Activated CD4-positive, alpha-beta memory T cell treated with anti-CD3 and anti-CD28 coated beads for 36 hours (primary cell): ENCODE measurements at regions of chr6 and their contacts with region 1.

Region 1: GRCh38 chr6:170554013-170554795 is at the start of gene TBP:
- DNase-seq: peak; percentile 99
- H3K4me3 Mint-ChIP-seq: no peak within 1 kb of the TSS
- H3K27ac Mint-ChIP-seq: no peak within 1 kb of the TSS
- H3K4me1 Mint-ChIP-seq: peaks cover 40% of the 10 kb centered on the region
- H3K27me3 Mint-ChIP-seq: no peaks in the 10 kb centered on the region
- total RNA-seq, gene TBP: 21.2 to 22.3 TPM

Region 2: GRCh38 chr6:168968228-168968627 is 1586.0 kb before region 1 on chr6:
- CTCF ChIA-PET with region 1: no interaction called
- POLR2A ChIA-PET with region 1: no interaction called
- intact Hi-C with region 1: no loop called
- DNase-seq: peak; percentile 16
- H3K4me3 Mint-ChIP-seq: no peak overlapping the region
- H3K27ac Mint-ChIP-seq: no peak overlapping the region
- H3K4me1 Mint-ChIP-seq: no peaks in the 10 kb centered on the region
- H3K27me3 Mint-ChIP-seq: peaks cover 15% of the 10 kb centered on the region

Region 3: DNA sequence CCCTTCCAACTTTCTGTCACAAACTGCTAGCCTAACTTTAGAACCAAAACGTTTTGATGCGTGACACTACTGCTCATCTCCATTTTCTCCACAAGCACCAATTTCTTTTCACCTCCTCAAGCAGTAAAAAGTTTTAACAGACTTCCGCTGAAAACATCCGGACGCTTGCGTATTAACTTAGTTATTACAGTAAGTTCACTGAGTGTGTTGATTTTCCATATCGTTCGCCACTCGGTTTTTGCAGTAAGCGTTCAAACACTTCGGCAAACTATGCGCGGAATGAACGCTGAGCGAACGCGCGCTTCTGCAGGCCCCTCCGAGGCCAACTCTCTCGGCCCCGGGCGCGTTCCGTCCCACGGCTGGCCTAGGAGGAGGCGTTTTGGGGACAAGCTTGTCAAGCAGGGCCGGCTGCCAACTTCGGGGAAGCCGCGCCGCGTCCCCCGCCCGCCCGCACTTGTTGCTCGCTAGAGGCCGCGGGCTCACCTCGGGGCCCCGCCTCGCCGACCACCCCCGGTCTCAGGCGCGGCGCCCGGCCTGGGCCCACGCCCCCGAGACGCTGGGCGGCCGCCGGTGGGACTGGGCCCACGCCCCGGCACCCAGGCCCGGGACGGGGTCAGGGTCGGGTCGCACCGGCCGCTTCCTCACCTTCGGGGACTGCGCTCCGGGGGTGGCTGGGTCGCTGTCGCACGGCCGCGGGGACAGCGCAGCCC is 830.8 kb before region 1 on chr6:
- CTCF ChIA-PET with region 1: no interaction called
- POLR2A ChIA-PET with region 1: no interaction called
- intact Hi-C with region 1: loop called (anchors 1 kb)
- DNase-seq: peak; percentile 76
- H3K4me3 Mint-ChIP-seq: peak overlapping the region; percentile 98
- H3K27ac Mint-ChIP-seq: peak overlapping the region; percentile 100
- H3K4me1 Mint-ChIP-seq: peaks cover 42% of the 10 kb centered on the region
- H3K27me3 Mint-ChIP-seq: no peaks in the 10 kb centered on the region

Region 4: GRCh38 chr6:169751242-169752073 is 802.7 kb before region 1 on chr6 and contains the starts of genes DYNLT2 and ERMARD:
- CTCF ChIA-PET with region 1: interaction called, 4 read pairs
- POLR2A ChIA-PET with region 1: interaction called, 5 read pairs
- intact Hi-C with region 1: loop called (anchors 1 kb)
- DNase-seq: peak; percentile 96
- H3K4me3 Mint-ChIP-seq: peak within 1 kb of the TSS; percentile 95
- H3K27ac Mint-ChIP-seq: peak within 1 kb of the TSS; percentile 98
- H3K4me1 Mint-ChIP-seq: peaks cover 29% of the 10 kb centered on the region
- H3K27me3 Mint-ChIP-seq: no peaks in the 10 kb centered on the region
- total RNA-seq, gene DYNLT2: 2.0 to 2.1 TPM
- total RNA-seq, gene ERMARD: 23.9 to 24.6 TPM

Region 5: GRCh38 chr6:170306324-170307079 is 247.7 kb before region 1 on chr6 and contains the start of gene FAM120B:
- CTCF ChIA-PET with region 1: no interaction called
- POLR2A ChIA-PET with region 1: interaction called, 3 read pairs
- intact Hi-C with region 1: loop called (anchors 1 kb)
- DNase-seq: peak; percentile 96
- H3K4me3 Mint-ChIP-seq: peak within 1 kb of the TSS; percentile 96
- H3K27ac Mint-ChIP-seq: peak within 1 kb of the TSS; percentile 87
- H3K4me1 Mint-ChIP-seq: peaks cover 41% of the 10 kb centered on the region
- H3K27me3 Mint-ChIP-seq: peaks cover 12% of the 10 kb centered on the region
- total RNA-seq, gene FAM120B: 18.4 to 20.0 TPM

Region 6: GRCh38 chr6:170584181-170584953 is 30.2 kb after region 1 on chr6 and contains the start of gene PDCD2:
- CTCF ChIA-PET with region 1: interaction called, 12 read pairs
- POLR2A ChIA-PET with region 1: interaction called, 21 read pairs
- intact Hi-C with region 1: loop called (anchors 1 kb)
- DNase-seq: peak; percentile 95
- H3K4me3 Mint-ChIP-seq: peak within 1 kb of the TSS; percentile 99
- H3K27ac Mint-ChIP-seq: peak within 1 kb of the TSS; percentile 96
- H3K4me1 Mint-ChIP-seq: peaks cover 35% of the 10 kb centered on the region
- H3K27me3 Mint-ChIP-seq: peaks cover 2% of the 10 kb centered on the region
- total RNA-seq, gene PDCD2: 120 to 126 TPM